ENCODE measurements at regions of chr9 and their contacts with region 1.

Region 1: DNA sequence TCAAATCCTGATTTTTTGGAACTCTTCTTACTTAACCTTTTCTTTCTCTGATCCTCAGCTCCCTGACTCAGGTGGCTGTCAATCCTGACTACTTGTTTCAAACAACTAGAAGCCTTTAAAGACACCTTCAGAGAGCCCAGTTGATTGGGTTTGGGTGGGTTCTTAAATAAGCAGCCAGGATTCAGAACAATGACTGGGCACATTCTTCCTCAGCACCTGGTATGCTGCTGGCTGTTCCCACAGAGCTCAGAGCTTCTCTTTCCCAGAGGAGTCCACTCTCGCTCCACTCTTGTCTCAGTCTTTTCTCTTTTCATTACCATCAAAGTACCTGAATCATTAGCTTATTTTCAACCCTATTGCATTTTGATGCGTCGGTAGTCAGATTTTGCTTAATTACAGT is 22.5 kb downstream of the PCSK5 start:
- DNase-seq: no peak
- ATAC-seq: peak; percentile 74
- H3K4me3 Mint-ChIP-seq: no peak overlapping the region
- H3K27ac Mint-ChIP-seq: peak overlapping the region; percentile 53
- H3K4me1 Mint-ChIP-seq: peaks cover 54% of the 10 kb centered on the region
- H3K27me3 Mint-ChIP-seq: no peaks in the 10 kb centered on the region
- CTCF ChIP-seq: no peak

Region 2: DNA sequence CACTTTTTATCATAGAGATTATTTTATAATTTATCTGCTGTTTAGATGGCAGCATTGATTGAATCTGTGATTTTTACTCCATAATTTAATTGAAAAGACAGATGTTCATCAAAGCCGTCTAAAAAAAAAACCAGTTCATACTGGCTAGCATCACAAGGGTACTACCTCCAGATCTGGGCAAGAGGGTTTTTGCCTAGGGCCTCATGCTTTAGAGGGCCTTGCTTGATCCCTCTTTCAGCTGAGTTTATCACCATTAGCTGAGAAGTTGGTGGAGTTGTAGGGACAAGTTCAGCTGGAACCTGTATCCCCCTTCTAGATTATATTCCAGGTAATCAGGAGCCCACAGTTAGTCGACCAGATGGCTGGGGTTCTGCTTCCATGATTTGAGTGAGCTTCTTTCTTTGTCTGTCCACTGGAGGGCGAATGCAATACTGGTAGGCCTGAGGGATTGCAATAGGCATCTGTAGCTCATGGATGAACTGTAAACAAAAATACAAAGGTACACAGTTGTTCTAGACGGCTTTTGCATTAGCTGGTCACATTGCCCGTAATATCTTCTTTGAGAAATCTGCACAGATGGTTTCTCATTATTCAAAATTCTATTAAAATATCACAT is 66.3 kb after region 1 on chr9:
- CTCF ChIA-PET with region 1: interaction called, 10 read pairs
- POLR2A ChIA-PET with region 1: no interaction called
- DNase-seq: peak; percentile 25
- ATAC-seq: peak; percentile 89
- H3K4me3 Mint-ChIP-seq: no peak overlapping the region
- H3K27ac Mint-ChIP-seq: no peak overlapping the region
- H3K4me1 Mint-ChIP-seq: peaks cover 32% of the 10 kb centered on the region
- H3K27me3 Mint-ChIP-seq: no peaks in the 10 kb centered on the region
- CTCF ChIP-seq: no peak

Measured in WTC11 (cell line).